B cell (primary cell): ENCODE measurements at regions of chr2 and their contacts with region 1.

Region 1: DNA sequence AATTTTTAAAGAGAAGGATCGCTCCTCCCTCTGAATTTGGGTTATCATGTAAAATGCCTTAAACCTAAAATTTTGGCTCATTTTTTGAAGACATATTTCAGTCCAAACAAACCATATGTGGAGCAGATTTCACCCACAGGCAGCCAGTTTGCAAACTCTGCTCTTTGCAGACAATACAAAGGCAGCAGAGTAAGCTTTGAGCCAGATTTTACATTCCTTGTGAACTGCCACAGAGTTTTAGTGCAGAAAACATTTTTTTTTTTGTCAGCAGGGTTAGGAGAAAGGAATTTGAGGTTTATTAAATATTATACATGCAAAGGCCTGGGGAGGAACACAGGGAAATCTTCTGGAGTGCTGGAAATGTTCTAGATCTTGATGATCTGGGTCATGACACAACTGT is 171.9 kb upstream of the FN1 start:
- DNase-seq: no peak
- ATAC-seq: no peak
- H3K4me3 ChIP-seq: no peak overlapping the region
- H3K4me3 Mint-ChIP-seq: no peak overlapping the region
- H3K27ac ChIP-seq: no peak overlapping the region
- H3K27ac Mint-ChIP-seq: no peak overlapping the region
- H3K4me1 ChIP-seq: no peaks in the 10 kb centered on the region
- H3K4me1 Mint-ChIP-seq: no peaks in the 10 kb centered on the region
- H3K27me3 ChIP-seq: no peaks in the 10 kb centered on the region
- H3K27me3 Mint-ChIP-seq: peaks cover 18% of the 10 kb centered on the region
- CTCF ChIP-seq: no peak

Region 2: GRCh38 chr2:215579809-215580208 is 28.0 kb before region 1 on chr2:
- CTCF ChIA-PET with region 1: no interaction called
- POLR2A ChIA-PET with region 1: no interaction called
- intact Hi-C with region 1: loop called (anchors 1 kb)
- DNase-seq: no peak
- ATAC-seq: no peak
- H3K4me3 ChIP-seq: no peak overlapping the region
- H3K4me3 Mint-ChIP-seq: no peak overlapping the region
- H3K27ac ChIP-seq: no peak overlapping the region
- H3K27ac Mint-ChIP-seq: no peak overlapping the region
- H3K4me1 ChIP-seq: no peaks in the 10 kb centered on the region
- H3K4me1 Mint-ChIP-seq: no peaks in the 10 kb centered on the region
- H3K27me3 ChIP-seq: no peaks in the 10 kb centered on the region
- H3K27me3 Mint-ChIP-seq: peaks cover 3% of the 10 kb centered on the region
- CTCF ChIP-seq: no peak

Region 3: GRCh38 chr2:215624423-215624829 is 16.7 kb after region 1 on chr2:
- CTCF ChIA-PET with region 1: no interaction called
- POLR2A ChIA-PET with region 1: no interaction called
- intact Hi-C with region 1: no loop called
- DNase-seq: no peak
- ATAC-seq: no peak
- H3K4me3 ChIP-seq: no peak overlapping the region
- H3K4me3 Mint-ChIP-seq: no peak overlapping the region
- H3K27ac ChIP-seq: no peak overlapping the region
- H3K27ac Mint-ChIP-seq: no peak overlapping the region
- H3K4me1 ChIP-seq: no peaks in the 10 kb centered on the region
- H3K4me1 Mint-ChIP-seq: no peaks in the 10 kb centered on the region
- H3K27me3 ChIP-seq: peaks cover 0 to 9% (median 0%) of the 10 kb centered on the region in 4 experiments
- H3K27me3 Mint-ChIP-seq: peaks cover 21% of the 10 kb centered on the region
- CTCF ChIP-seq: no peak